Head of caudate nucleus (tissue), 42 donors: ENCODE measurements at regions of chr5 and their contacts with region 1.

Region 1: GRCh38 chr5:128201065-128201926 is 117.7 kb downstream of the SLC12A2 start:
- DNase-seq: peak; percentile 64 to 96 (median 88)

Region 2: DNA sequence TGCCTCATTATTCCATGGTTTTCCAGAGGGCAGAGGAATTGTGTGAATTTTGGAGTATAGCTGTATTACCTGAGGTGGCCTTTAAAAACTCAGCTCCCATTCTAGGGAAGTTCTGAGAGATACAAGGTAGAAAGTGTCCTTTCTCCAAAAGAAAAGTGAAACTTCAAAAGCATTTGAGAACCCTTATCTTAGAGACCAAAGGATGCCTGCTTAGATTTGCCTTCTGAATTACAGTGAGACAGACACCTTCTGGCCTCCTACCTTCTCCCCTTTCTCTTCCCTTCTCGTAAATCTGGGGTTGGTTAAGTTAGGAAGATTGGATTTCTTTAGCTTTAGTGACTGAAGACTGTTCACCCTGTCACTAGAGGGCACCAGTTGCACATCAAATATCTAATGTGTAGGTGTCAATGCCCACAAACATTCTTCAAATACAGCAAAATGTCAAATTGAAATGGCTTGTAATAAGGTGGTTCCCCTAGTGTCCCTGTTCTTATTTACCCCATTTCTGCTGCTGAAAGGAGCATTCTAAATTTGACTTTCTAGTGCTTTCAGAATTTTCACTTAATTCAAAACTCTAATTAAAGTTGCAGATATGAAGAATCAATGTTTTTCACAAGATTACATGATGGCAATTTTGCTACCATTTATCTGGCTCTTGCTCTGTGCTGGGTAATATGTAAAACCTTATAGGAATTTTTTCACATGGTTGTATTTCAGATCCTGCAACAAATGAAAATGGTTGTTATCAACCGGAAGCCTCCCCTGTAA is 637.1 kb before region 1 on chr5:
- intact Hi-C with region 1: loop called (anchors 5 kb)
- DNase-seq: peak in 33 of 42 donors; percentile 5 to 80 (median 49)

Region 3: GRCh38 chr5:127754259-127754658 is 447.0 kb before region 1 on chr5:
- intact Hi-C with region 1: no loop called
- DNase-seq: no peak

Region 4: GRCh38 chr5:127766676-127767340 is 434.5 kb before region 1 on chr5:
- intact Hi-C with region 1: loop called (anchors 10 kb)
- DNase-seq: no peak

Region 5: GRCh38 chr5:127875235-127876021 is 325.9 kb before region 1 on chr5:
- intact Hi-C with region 1: loop called (anchors 10 kb)
- DNase-seq: peak; percentile 13 to 86 (median 59)

Region 6: GRCh38 chr5:128083033-128083810 is 118.1 kb before region 1 on chr5 and contains the start of gene SLC12A2:
- intact Hi-C with region 1: loop called (anchors 5 kb)
- DNase-seq: peak; percentile 79 to 96 (median 92)

Region 7: DNA sequence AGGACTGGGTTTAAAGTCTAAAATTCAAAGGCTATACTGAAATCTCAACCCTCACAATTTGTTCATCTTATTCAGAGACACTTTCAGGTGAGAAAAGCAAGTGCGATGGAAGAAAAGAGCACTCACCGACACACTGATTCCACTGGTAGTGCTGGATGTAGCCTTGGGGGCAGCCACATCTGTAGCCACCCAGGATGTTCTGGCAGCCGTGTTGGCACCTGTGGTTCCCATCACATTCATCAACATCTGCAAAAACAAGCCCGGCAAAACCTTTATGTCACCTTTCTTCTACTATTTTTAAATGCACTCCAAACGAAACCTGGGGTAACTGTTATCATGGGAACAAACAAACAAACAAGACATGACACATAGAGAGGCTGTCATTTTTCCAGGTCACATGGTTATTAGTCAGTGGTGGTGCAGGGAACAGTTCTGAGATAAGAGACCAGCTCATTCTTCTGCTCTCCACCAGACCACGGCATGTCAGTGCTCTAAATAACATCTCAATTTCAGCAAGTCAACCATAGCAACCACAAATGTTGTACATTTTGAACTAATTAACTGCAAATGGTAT is 70.7 kb after region 1 on chr5:
- intact Hi-C with region 1: no loop called
- DNase-seq: no peak

Region 8: GRCh38 chr5:128513806-128514205 is 312.5 kb after region 1 on chr5:
- intact Hi-C with region 1: no loop called
- DNase-seq: no peak